ENCODE measurements at regions of chr15 and their contacts with region 1.

Region 1: DNA sequence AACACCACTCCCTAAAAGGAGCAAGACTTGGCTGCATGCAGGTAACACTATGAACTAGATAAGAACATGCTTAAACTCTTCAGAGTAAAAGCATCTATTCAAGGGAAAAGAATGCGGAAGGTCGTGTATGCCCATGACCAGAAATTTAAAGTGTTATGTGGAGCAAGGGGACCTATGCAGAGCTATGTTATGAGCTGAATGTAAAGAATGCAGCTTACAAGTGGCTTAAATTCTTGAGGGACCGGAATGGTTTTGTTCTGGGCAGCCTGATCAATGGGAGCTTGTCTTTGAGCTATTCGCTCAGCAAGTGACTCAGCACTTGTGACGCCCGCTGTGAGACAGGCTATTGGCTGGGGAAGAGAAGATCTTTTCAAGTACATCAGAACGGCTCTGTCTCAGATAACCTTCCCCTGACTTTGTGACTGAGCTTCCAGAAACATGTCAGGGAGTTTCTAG is 367.5 kb upstream of the THBS1 start:
- DNase-seq: peak; percentile 98
- H3K4me3 ChIP-seq: no peak overlapping the region
- H3K27ac ChIP-seq: peak overlapping the region; percentile 77
- H3K4me1 ChIP-seq: peaks cover 13% of the 10 kb centered on the region
- H3K27me3 ChIP-seq: no peaks in the 10 kb centered on the region
- CTCF ChIP-seq: no peak

Region 2: GRCh38 chr15:39177561-39177960 is 35.9 kb before region 1 on chr15:
- CTCF ChIA-PET with region 1: no interaction called
- dilution Hi-C with region 1: no loop called
- in situ Hi-C with region 1: no loop called
- intact Hi-C with region 1: loop called (anchors 1 kb)
- DNase-seq: peak; percentile 100
- H3K4me3 ChIP-seq: no peak overlapping the region
- H3K27ac ChIP-seq: peak overlapping the region; percentile 96
- H3K4me1 ChIP-seq: peaks cover 67% of the 10 kb centered on the region
- H3K27me3 ChIP-seq: no peaks in the 10 kb centered on the region
- CTCF ChIP-seq: no peak

Region 3: DNA sequence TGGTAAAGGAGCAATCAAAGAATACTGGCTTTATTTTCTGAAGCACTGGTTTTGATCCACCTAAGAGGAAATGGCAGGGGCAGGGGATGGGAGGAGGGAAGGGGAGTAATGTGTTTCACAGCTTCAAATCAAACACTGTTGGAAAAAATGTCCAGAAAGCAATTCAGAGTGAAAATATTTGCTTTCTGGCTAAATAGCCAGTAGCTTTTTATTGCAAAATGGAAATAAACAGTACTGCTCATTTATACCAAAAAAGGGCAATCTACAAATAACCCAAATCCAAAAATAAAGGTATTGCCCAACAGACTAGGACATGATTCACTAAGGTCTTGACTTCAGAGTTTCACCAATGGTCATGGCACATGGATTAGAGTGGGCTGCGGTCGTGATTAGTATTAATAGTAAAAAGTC is 88.2 kb after region 1 on chr15:
- CTCF ChIA-PET with region 1: no interaction called
- dilution Hi-C with region 1: no loop called
- in situ Hi-C with region 1: no loop called
- intact Hi-C with region 1: loop called (anchors 1 kb)
- DNase-seq: peak; percentile 20
- H3K4me3 ChIP-seq: no peak overlapping the region
- H3K27ac ChIP-seq: peak overlapping the region; percentile 43
- H3K4me1 ChIP-seq: peaks cover 67% of the 10 kb centered on the region
- H3K27me3 ChIP-seq: no peaks in the 10 kb centered on the region
- CTCF ChIP-seq: no peak